ENCODE measurements at regions of chr6 and their contacts with region 1.

Region 1: DNA sequence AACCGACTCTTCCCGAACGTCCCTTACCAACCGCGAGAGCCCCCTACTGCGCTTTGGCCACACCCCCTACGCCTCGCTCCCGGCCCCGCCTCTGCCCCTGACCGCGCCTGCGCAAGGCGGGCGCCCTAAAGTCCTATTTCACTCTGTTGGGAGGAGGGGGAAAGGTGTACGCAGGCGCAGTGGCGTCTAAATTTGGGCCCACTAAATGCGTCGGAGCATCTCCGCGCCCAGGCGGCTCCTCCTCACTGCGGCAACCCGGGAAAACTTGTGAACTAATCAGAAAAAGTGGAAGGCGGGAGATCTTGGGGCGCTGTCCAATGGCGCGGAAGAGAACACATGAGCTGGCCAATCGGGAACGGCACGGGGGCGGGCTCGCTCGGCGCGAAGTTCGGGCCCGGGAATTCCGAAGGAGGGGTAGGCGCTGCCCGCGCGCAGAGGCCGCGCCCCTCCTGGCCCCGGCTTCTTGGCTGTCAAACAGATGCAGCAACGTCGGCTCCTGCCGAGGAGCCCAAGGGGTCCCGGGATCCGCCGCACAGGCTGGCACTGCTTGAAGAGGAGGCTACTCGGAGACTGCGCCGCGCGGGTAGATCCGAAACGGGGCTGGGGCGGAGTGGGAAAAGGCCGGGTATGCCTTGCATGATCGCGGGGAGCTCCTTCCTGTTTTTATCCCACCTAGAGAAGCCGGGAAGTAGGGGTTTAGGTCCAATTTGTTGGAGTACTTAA is at the start of gene TCF19:
- DNase-seq: peak; percentile 100
- H3K4me3 Mint-ChIP-seq: peak within 1 kb of the TSS; percentile 97
- H3K27ac Mint-ChIP-seq: peak within 1 kb of the TSS; percentile 83
- H3K4me1 Mint-ChIP-seq: peaks cover 37% of the 10 kb centered on the region
- H3K27me3 Mint-ChIP-seq: no peaks in the 10 kb centered on the region
- total RNA-seq, gene TCF19: 72.0 to 73.3 TPM

Region 2: DNA sequence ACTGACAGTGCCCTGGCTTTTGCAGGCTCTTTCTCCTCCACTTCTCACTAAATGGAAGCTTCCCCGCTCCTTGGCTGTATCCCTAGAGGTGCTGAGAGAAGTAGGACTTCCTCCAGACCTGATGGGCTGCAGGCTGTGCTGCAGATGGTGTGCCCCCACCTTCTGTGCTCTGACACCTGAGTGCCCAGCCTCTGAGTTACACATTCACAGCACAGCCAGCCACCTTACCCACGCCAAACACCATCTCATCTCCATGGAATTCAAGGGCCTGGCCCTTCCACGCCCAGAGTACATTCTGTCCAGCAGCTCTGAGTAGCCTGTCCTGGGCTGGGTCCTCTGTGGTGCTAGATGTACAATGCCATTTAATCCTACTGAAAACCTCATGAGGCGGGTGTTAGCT is 231.7 kb before region 1 on chr6:
- CTCF ChIA-PET with region 1: no interaction called
- intact Hi-C with region 1: no loop called
- DNase-seq: no peak
- H3K4me3 Mint-ChIP-seq: no peak overlapping the region
- H3K27ac Mint-ChIP-seq: no peak overlapping the region
- H3K4me1 Mint-ChIP-seq: no peaks in the 10 kb centered on the region
- H3K27me3 Mint-ChIP-seq: no peaks in the 10 kb centered on the region

Region 3: DNA sequence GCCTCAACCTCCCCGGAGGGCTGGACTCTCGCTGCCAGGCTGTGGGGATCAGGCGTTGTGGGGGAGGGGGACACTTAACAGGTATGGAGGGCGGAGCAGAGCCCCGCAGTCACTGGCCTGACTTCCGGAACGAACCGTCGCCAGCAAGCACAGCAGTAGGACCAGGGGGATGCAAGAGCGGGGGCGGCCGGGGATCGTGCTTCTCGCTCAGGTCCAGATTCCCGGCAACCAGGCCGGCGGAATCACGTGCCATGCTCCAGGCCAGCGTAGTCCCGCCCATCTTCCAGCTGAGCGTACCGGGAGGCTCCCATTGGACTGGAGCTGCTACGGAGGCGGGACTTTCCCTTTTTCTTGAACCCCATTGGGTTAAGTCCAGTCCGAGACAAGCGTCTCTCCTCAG is 22.2 kb after region 1 on chr6:
- CTCF ChIA-PET with region 1: no interaction called
- intact Hi-C with region 1: loop called (anchors 2 kb)
- DNase-seq: peak; percentile 79
- H3K4me3 Mint-ChIP-seq: peak overlapping the region; percentile 79
- H3K27ac Mint-ChIP-seq: peak overlapping the region; percentile 63
- H3K4me1 Mint-ChIP-seq: peaks cover 12% of the 10 kb centered on the region
- H3K27me3 Mint-ChIP-seq: no peaks in the 10 kb centered on the region

Region 4: DNA sequence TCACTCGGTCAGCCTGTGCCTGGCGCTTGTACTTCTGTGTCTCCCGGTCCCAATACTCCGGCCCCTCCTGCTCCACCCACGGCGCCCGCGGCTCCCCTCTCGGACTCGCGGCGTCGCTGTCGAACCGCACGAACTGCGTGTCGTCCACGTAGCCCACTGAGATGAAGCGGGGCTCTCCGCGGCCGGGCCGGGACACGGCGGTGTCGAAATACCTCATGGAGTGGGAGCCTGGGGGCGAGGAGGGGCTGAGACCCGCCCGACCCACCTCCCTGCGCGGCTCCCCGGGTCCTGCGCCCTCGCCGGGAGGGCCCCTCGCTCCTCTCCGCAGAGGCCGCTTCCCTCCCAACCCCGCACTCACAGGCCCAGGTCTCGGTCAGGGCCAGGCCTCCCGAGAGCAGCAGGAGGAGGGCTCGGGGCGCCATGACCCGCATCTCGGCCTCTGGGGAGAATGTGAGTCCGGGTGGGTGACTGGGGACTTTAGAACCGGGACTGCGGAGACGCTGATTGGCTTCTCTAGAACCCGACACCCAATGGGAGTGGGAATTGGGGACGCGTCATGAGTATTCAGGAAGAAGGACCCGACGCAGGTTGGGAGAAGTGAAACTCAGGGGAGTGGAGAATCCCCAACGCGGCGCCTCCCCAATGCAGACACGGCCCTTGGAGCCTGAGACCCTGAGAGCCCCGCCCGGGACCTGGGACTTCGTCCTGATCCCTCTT is 113.5 kb after region 1 on chr6 and contains the start of gene HLA-C:
- CTCF ChIA-PET with region 1: no interaction called
- intact Hi-C with region 1: loop called (anchors 2 kb)
- DNase-seq: peak; percentile 96
- H3K4me3 Mint-ChIP-seq: peak within 1 kb of the TSS; percentile 98
- H3K27ac Mint-ChIP-seq: peak within 1 kb of the TSS; percentile 100
- H3K4me1 Mint-ChIP-seq: peaks cover 46% of the 10 kb centered on the region
- H3K27me3 Mint-ChIP-seq: peaks cover 4% of the 10 kb centered on the region
- total RNA-seq, gene HLA-C: 1,018 to 1,049 TPM